Activated CD8-positive, alpha-beta T cell treated with anti-CD3 and anti-CD28 coated beads for 36 hours (primary cell): ENCODE measurements at regions of chr1 and their contacts with region 1.

Region 1: GRCh38 chr1:3856908-3857790 is at the starts of genes CEP104 and DFFB:
- DNase-seq: peak; percentile 98
- ATAC-seq: peak; percentile 98
- H3K4me3 Mint-ChIP-seq: peak within 1 kb of the TSS; percentile 95
- H3K27ac Mint-ChIP-seq: peak within 1 kb of the TSS; percentile 90
- H3K4me1 Mint-ChIP-seq: peaks cover 37% of the 10 kb centered on the region
- H3K27me3 Mint-ChIP-seq: no peaks in the 10 kb centered on the region
- CTCF ChIP-seq: peak; percentile 53
- total RNA-seq, gene CEP104: 29.3 to 29.8 TPM
- total RNA-seq, gene DFFB: 9.3 to 9.7 TPM

Region 2: GRCh38 chr1:3900119-3900968 is 43.2 kb after region 1 on chr1 and contains the start of gene C1orf174:
- CTCF ChIA-PET with region 1: interaction called, 11 read pairs
- POLR2A ChIA-PET with region 1: interaction called, 18 read pairs
- intact Hi-C with region 1: loop called (anchors 1 kb)
- DNase-seq: peak; percentile 94
- ATAC-seq: peak; percentile 81
- H3K4me3 Mint-ChIP-seq: peak within 1 kb of the TSS; percentile 88
- H3K27ac Mint-ChIP-seq: peak within 1 kb of the TSS; percentile 99
- H3K4me1 Mint-ChIP-seq: peaks cover 47% of the 10 kb centered on the region
- H3K27me3 Mint-ChIP-seq: no peaks in the 10 kb centered on the region
- CTCF ChIP-seq: no peak
- total RNA-seq, gene C1orf174: 43.7 to 44.0 TPM